ENCODE measurements at regions of chr12 and their contacts with region 1.

Region 1: DNA sequence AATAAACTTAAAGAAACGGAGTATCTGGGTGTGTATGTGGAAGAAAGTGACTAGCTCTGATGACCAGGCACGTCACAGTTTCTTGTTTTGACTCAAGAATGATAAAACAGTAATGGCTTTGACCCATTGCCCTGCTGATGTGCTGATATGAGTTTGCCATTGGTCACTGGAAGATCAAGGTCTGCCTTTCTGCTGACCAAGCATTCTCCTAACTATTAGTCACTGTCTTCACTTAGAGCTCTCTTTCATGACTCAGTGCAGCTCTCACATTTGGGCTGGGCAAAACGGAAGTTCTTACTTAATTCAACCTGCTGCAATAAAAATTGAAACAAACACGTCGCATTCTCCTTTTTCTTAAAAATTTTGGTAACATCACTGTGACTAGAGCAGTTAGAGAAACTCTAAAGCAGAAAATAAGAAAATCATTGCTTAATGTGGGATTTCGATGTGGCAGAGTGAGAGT is 366.7 kb downstream of the BTG1 start:
- DNase-seq: peak; percentile 68
- H3K4me3 Mint-ChIP-seq: peak overlapping the region; percentile 58
- H3K27ac Mint-ChIP-seq: peak overlapping the region; percentile 77
- H3K4me1 Mint-ChIP-seq: peaks cover 46% of the 10 kb centered on the region
- H3K27me3 Mint-ChIP-seq: no peaks in the 10 kb centered on the region

Region 2: GRCh38 chr12:90280564-90281058 is 1498.4 kb before region 1 on chr12:
- CTCF ChIA-PET with region 1: no interaction called
- intact Hi-C with region 1: loop called (anchors 2 kb)
- DNase-seq: peak; percentile 43
- H3K4me3 Mint-ChIP-seq: no peak overlapping the region
- H3K27ac Mint-ChIP-seq: peak overlapping the region; percentile 56
- H3K4me1 Mint-ChIP-seq: peaks cover 17% of the 10 kb centered on the region
- H3K27me3 Mint-ChIP-seq: peaks cover 9% of the 10 kb centered on the region

Region 3: DNA sequence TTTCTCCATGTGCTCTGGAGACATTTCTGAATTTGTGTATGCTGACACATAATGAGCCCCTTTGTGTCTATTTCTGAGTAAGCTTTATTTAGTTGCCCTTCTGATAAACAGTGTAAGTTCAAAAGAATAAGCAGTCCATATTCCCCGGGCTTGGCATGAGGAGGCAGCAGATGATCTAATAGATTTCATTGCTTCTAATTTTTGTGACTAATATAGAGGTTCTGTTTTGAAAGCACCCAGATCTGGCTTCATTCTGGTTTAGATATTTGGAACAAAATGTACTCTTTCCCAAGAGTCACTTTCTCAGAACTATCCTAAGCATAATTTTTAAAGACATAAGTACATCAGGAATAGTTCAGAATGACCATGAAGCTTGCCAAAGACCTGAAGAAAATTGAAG is 75.8 kb after region 1 on chr12:
- CTCF ChIA-PET with region 1: no interaction called
- intact Hi-C with region 1: loop called (anchors 2 kb)
- DNase-seq: no peak
- H3K4me3 Mint-ChIP-seq: no peak overlapping the region
- H3K27ac Mint-ChIP-seq: no peak overlapping the region
- H3K4me1 Mint-ChIP-seq: peaks cover 29% of the 10 kb centered on the region
- H3K27me3 Mint-ChIP-seq: no peaks in the 10 kb centered on the region

Region 4: DNA sequence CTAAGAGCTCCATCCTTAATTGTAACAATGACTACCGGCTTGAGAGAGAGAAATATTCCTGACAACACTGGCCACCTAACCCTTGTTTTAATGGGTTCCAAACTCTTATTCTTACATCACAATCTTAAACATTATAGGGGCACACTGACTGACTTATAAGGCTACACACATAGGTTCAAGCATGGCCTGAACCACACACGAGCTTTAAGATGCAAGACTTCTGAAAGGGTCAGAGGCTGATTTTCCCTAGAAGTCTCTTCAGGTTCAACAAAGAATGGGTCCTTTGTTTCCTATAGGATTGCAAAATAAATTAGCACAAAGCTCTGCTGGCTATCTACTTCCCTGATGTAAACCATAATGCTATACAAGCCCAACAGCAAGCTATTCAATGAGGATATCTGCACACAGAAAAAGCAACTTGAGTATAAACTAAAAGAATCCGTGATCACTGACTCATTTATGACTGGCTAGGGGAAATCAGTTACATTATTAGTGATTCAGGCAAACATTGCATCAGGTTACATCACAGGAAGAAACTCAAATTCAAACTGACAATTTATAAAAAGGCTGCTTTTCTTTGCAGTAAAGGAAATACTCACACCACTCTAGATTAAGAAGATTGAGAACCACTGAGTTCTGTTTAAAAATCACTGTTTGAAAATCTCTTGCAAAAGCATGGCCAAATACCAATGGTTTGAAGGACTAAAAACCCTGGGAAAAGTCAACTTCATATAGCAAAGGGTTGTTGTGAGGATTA is 358.2 kb after region 1 on chr12:
- CTCF ChIA-PET with region 1: no interaction called
- intact Hi-C with region 1: loop called (anchors 2 kb)
- DNase-seq: no peak
- H3K4me3 Mint-ChIP-seq: peak overlapping the region; percentile 100
- H3K27ac Mint-ChIP-seq: peak overlapping the region; percentile 99
- H3K4me1 Mint-ChIP-seq: peaks cover 58% of the 10 kb centered on the region
- H3K27me3 Mint-ChIP-seq: no peaks in the 10 kb centered on the region

Region 5: GRCh38 chr12:92382383-92382878 is 603.5 kb after region 1 on chr12:
- CTCF ChIA-PET with region 1: no interaction called
- intact Hi-C with region 1: loop called (anchors 5 kb)
- DNase-seq: no peak
- H3K4me3 Mint-ChIP-seq: no peak overlapping the region
- H3K27ac Mint-ChIP-seq: no peak overlapping the region
- H3K4me1 Mint-ChIP-seq: peaks cover 57% of the 10 kb centered on the region
- H3K27me3 Mint-ChIP-seq: no peaks in the 10 kb centered on the region

Region 6: GRCh38 chr12:92608151-92609091 is 829.5 kb after region 1 on chr12:
- CTCF ChIA-PET with region 1: no interaction called
- intact Hi-C with region 1: loop called (anchors 1 kb)
- DNase-seq: no peak
- H3K4me3 Mint-ChIP-seq: no peak overlapping the region
- H3K27ac Mint-ChIP-seq: no peak overlapping the region
- H3K4me1 Mint-ChIP-seq: peaks cover 29% of the 10 kb centered on the region
- H3K27me3 Mint-ChIP-seq: no peaks in the 10 kb centered on the region

Measured in activated naive CD4-positive, alpha-beta T cell treated with anti-CD3 and anti-CD28 coated beads for 36 hours (primary cell).